Right cardiac atrium (tissue), 5 donors: ENCODE measurements at regions of chr14 and their contacts with region 1.

Region 1: GRCh38 chr14:32076278-32077080 is 625 bp upstream of the ARHGAP5 start:
- DNase-seq: peak; percentile 97 to 99 (median 99)
- ATAC-seq: peak; percentile 96 to 97
- H3K4me3 ChIP-seq: peak overlapping the region; percentile 95
- H3K27ac ChIP-seq: peak overlapping the region; percentile 100
- H3K4me1 ChIP-seq: no peaks in the 10 kb centered on the region
- H3K27me3 ChIP-seq: no peaks in the 10 kb centered on the region

Region 2: GRCh38 chr14:31926123-31926522 is 150.4 kb before region 1 on chr14:
- intact Hi-C with region 1: loop called in 2 of 4 experiments (anchors 10 kb)
- DNase-seq: no peak
- ATAC-seq: no peak
- H3K4me3 ChIP-seq: no peak overlapping the region
- H3K27ac ChIP-seq: peak overlapping the region; percentile 28
- H3K4me1 ChIP-seq: peaks cover 3% of the 10 kb centered on the region
- H3K27me3 ChIP-seq: no peaks in the 10 kb centered on the region

Region 3: GRCh38 chr14:31937721-31938346 is 138.6 kb before region 1 on chr14:
- intact Hi-C with region 1: loop called in 2 of 4 experiments (anchors 10 kb)
- DNase-seq: peak in 1 of 3 donors; percentile 55
- ATAC-seq: peak; percentile 67 to 90
- H3K4me3 ChIP-seq: no peak overlapping the region
- H3K27ac ChIP-seq: no peak overlapping the region
- H3K4me1 ChIP-seq: peaks cover 2% of the 10 kb centered on the region
- H3K27me3 ChIP-seq: no peaks in the 10 kb centered on the region

Region 4: DNA sequence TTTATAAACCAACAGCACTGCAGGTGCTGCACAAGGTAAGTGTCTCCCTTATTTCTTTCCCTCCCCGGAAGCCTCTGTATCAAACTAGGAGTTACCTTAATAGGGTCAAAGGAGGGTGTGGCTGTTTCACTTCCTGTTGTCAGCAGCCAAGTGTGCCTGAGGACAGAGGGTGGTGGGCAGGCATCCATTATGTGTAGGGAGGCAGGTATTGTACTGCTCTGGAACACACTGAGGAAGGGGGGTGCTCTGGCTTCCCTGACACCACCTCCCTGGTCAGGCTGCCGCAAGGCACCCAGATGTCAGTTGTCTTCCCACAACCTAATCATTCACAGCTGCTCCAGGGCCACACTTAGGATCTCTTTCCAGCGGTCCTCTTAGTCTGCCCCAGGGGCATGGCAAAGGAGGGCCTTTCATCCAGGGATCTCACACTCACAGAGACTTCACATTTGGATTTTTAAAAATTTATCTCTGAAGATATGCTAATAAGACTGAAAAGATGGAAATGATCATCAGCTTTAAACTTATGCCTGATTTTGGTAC is 131.3 kb before region 1 on chr14:
- intact Hi-C with region 1: loop called in 1 of 4 experiments (anchors 10 kb)
- DNase-seq: no peak
- ATAC-seq: no peak
- H3K4me3 ChIP-seq: no peak overlapping the region
- H3K27ac ChIP-seq: no peak overlapping the region
- H3K4me1 ChIP-seq: no peaks in the 10 kb centered on the region
- H3K27me3 ChIP-seq: no peaks in the 10 kb centered on the region

Region 5: DNA sequence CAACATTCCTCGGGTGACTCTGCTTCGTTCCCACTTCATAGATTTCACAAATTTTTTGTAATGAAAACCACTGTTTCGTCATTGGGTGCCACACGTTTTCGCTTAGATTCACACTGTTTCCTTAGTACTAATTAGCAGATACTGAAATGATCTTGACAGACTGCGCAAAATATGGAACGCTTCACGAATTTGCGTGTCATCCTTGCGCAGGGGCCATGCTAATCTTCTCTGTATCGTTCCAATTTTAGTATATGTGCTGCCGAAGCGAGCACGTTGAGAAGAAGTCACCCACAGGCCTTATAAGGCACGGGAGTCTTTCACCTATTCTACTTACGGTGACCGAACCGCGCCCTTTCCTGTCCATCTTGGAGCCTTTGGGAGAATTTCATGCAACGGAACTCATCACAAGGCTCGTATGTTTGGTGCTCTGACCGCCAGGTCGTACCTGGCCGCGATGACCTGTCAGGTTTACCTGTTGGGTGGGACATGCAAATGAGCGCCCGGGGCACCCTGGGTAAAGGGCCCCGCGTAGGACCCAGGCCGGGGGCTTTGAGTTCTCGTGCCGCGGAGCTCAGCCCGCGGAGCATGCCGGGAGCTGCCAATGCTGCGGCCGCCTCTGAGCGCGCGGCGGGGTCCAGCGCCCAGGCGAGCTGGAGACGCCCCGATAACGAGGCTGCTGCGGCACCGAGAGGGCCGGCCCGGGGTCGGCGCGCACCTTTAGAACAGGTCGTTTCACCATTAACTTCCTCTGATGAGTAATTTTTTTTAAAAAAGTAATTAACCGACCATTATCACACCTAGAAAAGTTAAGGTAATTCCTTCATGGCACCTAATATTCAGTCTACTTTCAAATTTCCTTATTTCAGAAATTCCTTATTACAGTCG is 126.8 kb after region 1 on chr14 and contains the start of gene RNU6-8:
- intact Hi-C with region 1: loop called in 2 of 4 experiments (anchors 2 to 5 kb)
- DNase-seq: peak; percentile 90 to 96 (median 96)
- ATAC-seq: peak; percentile 96 to 97
- H3K4me3 ChIP-seq: peak within 1 kb of the TSS; percentile 56
- H3K27ac ChIP-seq: peak within 1 kb of the TSS; percentile 92
- H3K4me1 ChIP-seq: no peaks in the 10 kb centered on the region
- H3K27me3 ChIP-seq: no peaks in the 10 kb centered on the region
- total RNA-seq, gene RNU6-8: not detected

Region 6: DNA sequence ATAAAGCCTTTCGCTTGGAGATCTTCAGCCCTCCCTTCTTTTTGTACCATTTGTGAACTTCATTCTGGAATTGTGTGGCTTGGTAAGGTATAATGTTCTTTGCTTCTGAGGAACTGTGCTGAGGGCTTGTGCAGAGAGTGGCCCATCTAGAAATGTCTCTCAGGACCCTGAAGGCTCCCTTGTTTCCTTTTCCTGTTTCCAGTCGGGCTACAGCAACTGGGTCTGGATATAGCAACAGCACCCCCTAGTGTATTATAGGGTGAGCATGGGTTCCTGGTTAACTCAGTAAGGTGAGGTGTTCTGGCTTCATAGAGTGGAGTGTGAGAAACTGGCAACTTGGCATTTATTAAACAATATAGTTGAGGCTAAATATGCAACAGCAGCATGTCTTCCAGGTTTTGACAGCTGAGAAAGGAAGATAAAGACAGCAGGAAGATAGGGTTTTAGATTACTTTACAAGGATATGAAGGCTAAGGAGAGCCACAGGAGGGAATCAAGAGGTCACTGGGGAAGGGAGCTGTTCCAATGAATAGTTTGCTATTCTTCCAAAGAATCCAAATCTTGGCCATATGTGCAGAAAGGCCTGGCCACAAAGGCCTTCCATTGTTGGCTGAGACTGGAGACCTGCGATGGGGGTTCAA is 175.7 kb after region 1 on chr14:
- intact Hi-C with region 1: loop called in 3 of 4 experiments (anchors 5 kb)
- DNase-seq: no peak
- ATAC-seq: peak; percentile 81 to 89
- H3K4me3 ChIP-seq: no peak overlapping the region
- H3K27ac ChIP-seq: no peak overlapping the region
- H3K4me1 ChIP-seq: peaks cover 7% of the 10 kb centered on the region
- H3K27me3 ChIP-seq: no peaks in the 10 kb centered on the region

Region 7: DNA sequence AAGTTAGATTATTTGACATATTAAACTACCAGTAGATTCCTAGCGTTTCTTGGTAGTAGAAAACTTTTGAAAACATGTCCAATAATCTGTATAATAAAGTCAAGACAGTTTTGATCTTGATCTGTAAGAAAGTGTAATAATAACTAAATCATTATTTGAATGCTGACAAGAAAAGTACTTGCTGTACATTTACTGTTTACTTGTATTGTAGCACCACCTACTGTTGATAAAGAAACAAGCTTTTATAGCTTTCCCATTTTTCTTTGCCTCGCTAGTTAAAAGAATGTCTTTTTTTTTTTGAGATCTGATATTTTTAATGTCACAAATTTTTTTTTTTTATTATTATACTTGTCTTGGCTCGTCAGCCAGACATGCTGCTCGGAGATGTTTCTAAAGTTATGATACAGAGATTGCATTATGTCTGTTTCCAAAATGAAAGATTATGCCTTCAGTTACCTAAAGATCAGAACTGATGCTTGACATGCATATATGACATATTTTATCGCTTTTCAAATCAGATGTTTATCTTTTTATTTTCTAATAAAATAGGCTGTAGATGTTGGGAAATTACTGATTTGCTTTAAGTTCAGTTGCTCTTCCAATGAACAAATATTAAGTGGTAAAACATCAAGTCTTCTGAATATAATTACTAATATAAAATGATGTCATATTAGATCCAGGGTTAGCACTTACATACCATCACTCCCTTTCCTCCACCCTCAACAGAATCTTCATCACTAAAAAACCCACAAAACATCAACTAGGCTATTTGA is 393.1 kb after region 1 on chr14:
- intact Hi-C with region 1: loop called in 1 of 4 experiments (anchors 10 kb)
- DNase-seq: no peak
- ATAC-seq: peak; percentile 59 to 60
- H3K4me3 ChIP-seq: no peak overlapping the region
- H3K27ac ChIP-seq: no peak overlapping the region
- H3K4me1 ChIP-seq: peaks cover 4% of the 10 kb centered on the region
- H3K27me3 ChIP-seq: no peaks in the 10 kb centered on the region